ENCODE measurements at regions of chr19 and their contacts with region 1.

Region 1: GRCh38 chr19:54115109-54116063 is at the starts of genes PRPF31 and TFPT:
- DNase-seq: peak; percentile 99
- ATAC-seq: peak; percentile 93
- H3K4me3 ChIP-seq: peak within 1 kb of the TSS; percentile 71 to 86 (median 81)
- H3K4me3 Mint-ChIP-seq: peak within 1 kb of the TSS; percentile 89
- H3K27ac ChIP-seq: peak within 1 kb of the TSS; percentile 76 to 78
- H3K27ac Mint-ChIP-seq: peak within 1 kb of the TSS; percentile 87
- H3K4me1 ChIP-seq: peaks cover 14 to 25% of the 10 kb centered on the region in 2 donors
- H3K4me1 Mint-ChIP-seq: peaks cover 31% of the 10 kb centered on the region
- H3K27me3 ChIP-seq: no peaks in the 10 kb centered on the region
- H3K27me3 Mint-ChIP-seq: no peaks in the 10 kb centered on the region
- CTCF ChIP-seq: no peak
- total RNA-seq, gene PRPF31: 65.4 and 66.2 TPM in 2 replicates
- total RNA-seq, gene TFPT: 10.4 and 12.7 TPM in 2 replicates

Region 2: DNA sequence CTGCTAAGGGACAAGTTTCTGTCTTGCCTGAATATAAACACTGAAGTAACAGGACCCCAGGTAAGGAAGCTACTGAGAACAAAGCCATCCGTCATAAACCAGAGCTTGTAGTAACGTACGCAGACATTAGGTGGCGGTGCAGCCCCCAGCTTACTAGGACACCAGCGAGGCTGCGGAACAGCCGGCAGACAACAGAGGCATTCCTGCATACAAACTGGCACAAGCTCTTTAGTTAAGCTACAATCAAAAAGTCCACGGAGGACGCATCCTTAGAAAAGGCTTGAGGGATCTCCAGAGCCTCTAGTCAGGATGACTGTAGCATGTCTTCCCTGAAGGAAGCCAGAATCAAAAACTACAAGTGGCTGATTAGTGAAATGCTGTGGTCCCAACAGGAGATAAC is 1038.4 kb before region 1 on chr19:
- CTCF ChIA-PET with region 1: no interaction called
- POLR2A ChIA-PET with region 1: no interaction called
- intact Hi-C with region 1: no loop called
- DNase-seq: peak; percentile 20
- ATAC-seq: no peak
- H3K4me3 ChIP-seq: no peak overlapping the region
- H3K4me3 Mint-ChIP-seq: no peak overlapping the region
- H3K27ac ChIP-seq: no peak overlapping the region
- H3K27ac Mint-ChIP-seq: no peak overlapping the region
- H3K4me1 ChIP-seq: no peaks in the 10 kb centered on the region
- H3K4me1 Mint-ChIP-seq: peaks cover 3% of the 10 kb centered on the region
- H3K27me3 ChIP-seq: no peaks in the 10 kb centered on the region
- H3K27me3 Mint-ChIP-seq: no peaks in the 10 kb centered on the region
- CTCF ChIP-seq: peak; percentile 35

Region 3: DNA sequence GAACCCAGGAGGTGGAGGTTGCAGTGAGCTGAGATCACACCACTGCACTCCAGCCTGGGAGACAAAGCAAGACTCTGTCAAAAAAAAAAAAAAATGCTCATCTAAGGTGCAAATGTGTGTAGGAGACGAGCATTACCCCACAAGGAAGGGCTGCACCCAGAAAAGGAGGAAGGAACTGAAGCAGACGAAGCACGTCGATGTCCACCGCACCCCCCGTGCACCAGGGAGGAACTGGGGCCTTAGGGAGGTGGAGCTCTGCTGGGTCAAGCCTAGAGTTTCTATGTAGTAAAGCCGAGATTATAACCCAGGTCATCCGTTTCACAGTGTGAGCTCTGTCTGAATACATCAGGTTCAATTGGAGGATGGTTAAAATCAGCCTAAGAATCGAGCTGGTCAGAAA is 52.7 kb before region 1 on chr19:
- CTCF ChIA-PET with region 1: no interaction called
- POLR2A ChIA-PET with region 1: no interaction called
- intact Hi-C with region 1: no loop called
- DNase-seq: no peak
- ATAC-seq: no peak
- H3K4me3 ChIP-seq: no peak overlapping the region
- H3K4me3 Mint-ChIP-seq: no peak overlapping the region
- H3K27ac ChIP-seq: no peak overlapping the region
- H3K27ac Mint-ChIP-seq: no peak overlapping the region
- H3K4me1 ChIP-seq: no peaks in the 10 kb centered on the region
- H3K4me1 Mint-ChIP-seq: no peaks in the 10 kb centered on the region
- H3K27me3 ChIP-seq: no peaks in the 10 kb centered on the region
- H3K27me3 Mint-ChIP-seq: peaks cover 15% of the 10 kb centered on the region
- CTCF ChIP-seq: no peak

Region 4: DNA sequence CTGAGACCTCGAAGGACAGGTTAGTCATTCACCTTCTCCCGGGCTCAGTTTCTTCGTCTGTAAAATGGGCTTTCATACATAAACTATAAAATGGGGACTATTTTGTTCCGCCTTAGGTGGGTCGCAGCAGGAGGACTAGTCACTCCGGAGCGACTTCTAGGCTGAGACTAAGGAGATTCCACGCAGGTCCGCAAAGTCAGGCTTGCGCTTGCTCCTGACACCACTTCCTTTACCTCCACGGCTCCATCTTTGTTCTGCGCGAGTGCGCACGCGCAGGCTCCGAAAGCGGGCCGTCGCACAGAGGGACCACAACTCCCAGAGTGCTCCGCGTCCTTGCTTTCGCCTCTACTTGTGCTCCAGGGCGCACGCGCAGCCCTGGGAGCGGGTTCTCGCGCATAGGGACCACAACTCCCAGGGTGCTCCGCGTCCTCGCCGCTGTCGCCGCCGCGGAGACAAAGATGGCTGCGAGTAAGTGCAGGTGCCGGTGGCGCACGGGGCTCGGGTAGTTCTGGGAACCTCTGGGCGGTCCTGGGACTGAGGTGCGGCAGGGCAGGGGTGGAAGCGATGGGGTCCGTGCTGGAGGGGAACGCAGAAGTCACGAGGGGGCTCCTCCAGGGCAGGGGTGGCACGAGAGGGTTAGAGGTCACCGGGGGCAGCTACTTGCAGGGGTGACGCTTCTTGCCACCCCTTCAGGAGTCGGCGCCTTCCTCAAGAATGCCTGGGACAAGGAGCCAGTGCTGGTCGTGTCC is 12.8 kb before region 1 on chr19 and contains the start of gene NDUFA3:
- CTCF ChIA-PET with region 1: interaction called, 8 read pairs
- POLR2A ChIA-PET with region 1: interaction called, 15 read pairs
- intact Hi-C with region 1: loop called (anchors 1 kb)
- DNase-seq: peak; percentile 99
- ATAC-seq: peak; percentile 99
- H3K4me3 ChIP-seq: peak within 1 kb of the TSS; percentile 59 to 90 (median 76)
- H3K4me3 Mint-ChIP-seq: peak within 1 kb of the TSS; percentile 100
- H3K27ac ChIP-seq: peak within 1 kb of the TSS; percentile 59 to 74
- H3K27ac Mint-ChIP-seq: peak within 1 kb of the TSS; percentile 89
- H3K4me1 ChIP-seq: peaks cover 6 to 13% of the 10 kb centered on the region in 2 donors
- H3K4me1 Mint-ChIP-seq: peaks cover 20% of the 10 kb centered on the region
- H3K27me3 ChIP-seq: no peaks in the 10 kb centered on the region
- H3K27me3 Mint-ChIP-seq: no peaks in the 10 kb centered on the region
- CTCF ChIP-seq: no peak
- total RNA-seq, gene NDUFA3: 91.8 and 94.4 TPM in 2 replicates

Region 5: DNA sequence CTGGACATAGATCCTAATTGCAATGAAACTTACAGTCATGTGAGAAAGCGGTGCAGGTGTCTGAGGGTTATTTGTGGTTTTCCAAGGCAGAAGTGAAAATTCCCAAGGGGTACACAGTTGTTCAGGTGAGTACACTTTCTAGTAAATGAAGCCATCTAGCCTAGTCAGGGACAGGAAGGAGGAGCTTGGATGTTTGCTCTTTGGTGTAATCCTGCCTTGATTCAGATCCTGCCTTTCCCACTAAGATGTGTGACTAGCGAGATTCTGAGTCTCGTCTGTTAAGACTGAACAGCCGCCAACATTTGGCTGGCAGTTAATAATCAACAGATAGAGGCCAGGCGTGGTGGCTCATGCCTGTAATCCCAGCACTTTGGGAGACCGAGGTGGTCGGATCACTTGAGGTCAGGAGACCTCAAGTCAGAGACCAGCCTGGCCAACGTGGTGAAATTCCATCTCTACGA is 87.8 kb after region 1 on chr19:
- CTCF ChIA-PET with region 1: no interaction called
- POLR2A ChIA-PET with region 1: interaction called, 4 read pairs
- intact Hi-C with region 1: loop called (anchors 1 kb)
- DNase-seq: peak; percentile 23
- ATAC-seq: no peak
- H3K4me3 ChIP-seq: no peak overlapping the region
- H3K4me3 Mint-ChIP-seq: peak overlapping the region; percentile 96
- H3K27ac ChIP-seq: no peak overlapping the region
- H3K27ac Mint-ChIP-seq: peak overlapping the region; percentile 46
- H3K4me1 ChIP-seq: peaks cover 46 to 66% of the 10 kb centered on the region in 2 donors
- H3K4me1 Mint-ChIP-seq: peaks cover 71% of the 10 kb centered on the region
- H3K27me3 ChIP-seq: no peaks in the 10 kb centered on the region
- H3K27me3 Mint-ChIP-seq: no peaks in the 10 kb centered on the region
- CTCF ChIP-seq: no peak